ENCODE measurements at regions of chr12 and their contacts with region 1.

Region 1: GRCh38 chr12:69157023-69157655 is 82.2 kb upstream of the CPSF6 start:
- DNase-seq: no peak
- H3K4me3 ChIP-seq: peak overlapping the region in 1 of 4 donors; percentile 34
- H3K27ac ChIP-seq: no peak overlapping the region
- H3K4me1 ChIP-seq: peaks cover 0 to 11% (median 0%) of the 10 kb centered on the region in 3 donors
- H3K27me3 ChIP-seq: no peaks in the 10 kb centered on the region
- CTCF ChIP-seq: peak; percentile 66 to 86 (median 79)
- POLR2A ChIP-seq: no peak

Region 2: DNA sequence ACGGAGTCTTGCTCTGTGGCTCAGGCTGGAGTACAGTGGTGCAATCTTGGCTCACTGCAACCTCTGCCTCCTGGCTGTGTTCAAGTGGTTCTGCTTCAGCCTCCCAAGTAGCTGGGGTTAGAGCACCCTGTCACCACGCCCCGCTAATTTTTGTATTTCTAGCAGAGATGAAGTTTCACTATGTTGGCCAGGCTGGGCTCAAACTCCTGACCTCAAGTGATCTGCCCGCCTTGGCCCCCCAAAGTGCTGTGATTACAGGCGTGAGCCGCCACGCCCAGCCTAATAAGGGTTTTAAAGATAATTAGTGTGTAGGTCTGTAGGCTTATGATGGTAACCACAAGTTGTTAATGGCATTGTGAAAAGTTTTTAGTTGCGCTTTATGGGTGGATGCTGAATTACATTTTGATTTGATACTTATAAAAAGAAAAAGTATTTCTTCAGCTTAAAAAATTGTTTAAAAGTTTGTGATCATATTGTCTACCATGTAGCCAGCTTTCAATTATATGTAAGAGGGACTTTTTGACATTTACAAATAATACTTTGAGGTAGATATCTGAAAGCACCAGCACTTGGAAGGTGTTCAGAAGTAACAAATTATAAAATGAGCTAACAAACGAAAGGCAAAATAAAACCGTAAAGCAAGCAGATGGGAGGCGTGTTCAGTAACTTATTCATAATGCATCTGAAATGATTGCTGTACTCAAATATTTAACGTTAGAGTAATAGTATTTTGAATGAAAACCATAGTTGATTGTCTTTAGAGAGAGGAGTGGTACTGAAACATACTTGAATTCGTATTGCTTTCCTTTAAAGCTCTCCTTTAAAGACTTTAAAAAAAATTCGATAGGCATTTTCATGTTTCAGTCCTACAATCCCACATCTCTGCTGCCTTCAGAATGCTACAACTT is 312.1 kb before region 1 on chr12:
- intact Hi-C with region 1: no loop called
- DNase-seq: no peak
- H3K4me3 ChIP-seq: no peak overlapping the region
- H3K27ac ChIP-seq: no peak overlapping the region
- H3K4me1 ChIP-seq: no peaks in the 10 kb centered on the region
- H3K27me3 ChIP-seq: no peaks in the 10 kb centered on the region
- CTCF ChIP-seq: no peak
- POLR2A ChIP-seq: no peak

Region 3: DNA sequence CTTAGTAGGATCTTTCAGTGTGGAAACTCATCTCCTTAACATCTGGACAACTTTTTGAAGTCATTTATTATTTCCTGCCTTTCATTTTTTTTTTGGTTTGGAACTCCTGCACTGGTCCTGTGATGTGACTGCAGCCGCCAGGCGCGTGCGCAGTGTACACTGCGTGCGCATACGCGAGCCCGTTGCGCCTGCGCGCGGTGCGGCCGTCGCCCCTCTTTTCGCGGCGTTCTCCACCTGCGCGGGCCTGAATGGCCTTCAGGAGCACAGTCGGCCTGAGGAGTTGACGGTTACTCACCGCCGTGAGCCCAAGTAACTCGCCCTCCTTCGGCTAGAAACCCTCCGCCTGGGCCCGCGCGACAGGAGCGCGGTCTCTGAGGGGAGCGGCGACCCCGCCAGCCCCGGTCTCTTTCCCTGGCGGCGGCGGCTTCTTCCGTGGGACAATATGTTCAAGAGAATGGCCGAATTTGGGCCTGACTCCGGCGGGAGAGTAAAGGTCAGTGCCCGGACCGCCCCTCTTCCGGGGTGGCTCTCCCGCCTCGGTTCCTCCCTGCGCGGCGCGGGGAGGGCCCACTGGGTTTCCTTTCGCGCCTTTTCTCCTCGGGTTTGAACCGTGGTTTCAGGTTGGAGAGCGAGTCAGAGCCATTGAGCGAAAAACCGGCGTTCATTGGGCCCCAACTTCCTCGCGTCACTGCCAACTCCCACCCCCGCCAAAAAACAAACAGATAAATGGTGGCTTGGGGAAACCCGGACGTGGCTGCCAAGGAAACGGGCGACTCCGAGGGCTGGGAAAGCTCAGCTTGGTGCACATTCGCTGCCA is 202.6 kb after region 1 on chr12 and contains the start of gene YEATS4:
- intact Hi-C with region 1: loop called (anchors 10 kb)
- DNase-seq: peak; percentile 36
- H3K4me3 ChIP-seq: peak within 1 kb of the TSS; percentile 92 to 100 (median 93)
- H3K27ac ChIP-seq: peak within 1 kb of the TSS; percentile 98 to 100 (median 99)
- H3K4me1 ChIP-seq: peaks cover 6 to 30% (median 11%) of the 10 kb centered on the region in 3 donors
- H3K27me3 ChIP-seq: no peaks in the 10 kb centered on the region
- CTCF ChIP-seq: peak in 2 of 6 experiments; percentile 16 to 56
- POLR2A ChIP-seq: peak in 2 of 4 donors; percentile 64 to 70
- total RNA-seq, gene YEATS4: 15.0 to 36.9 (median 26.2) TPM